Naive thymus-derived CD8-positive, alpha-beta T cell (primary cell): ENCODE measurements at regions of chr3 and their contacts with region 1.

Region 1: DNA sequence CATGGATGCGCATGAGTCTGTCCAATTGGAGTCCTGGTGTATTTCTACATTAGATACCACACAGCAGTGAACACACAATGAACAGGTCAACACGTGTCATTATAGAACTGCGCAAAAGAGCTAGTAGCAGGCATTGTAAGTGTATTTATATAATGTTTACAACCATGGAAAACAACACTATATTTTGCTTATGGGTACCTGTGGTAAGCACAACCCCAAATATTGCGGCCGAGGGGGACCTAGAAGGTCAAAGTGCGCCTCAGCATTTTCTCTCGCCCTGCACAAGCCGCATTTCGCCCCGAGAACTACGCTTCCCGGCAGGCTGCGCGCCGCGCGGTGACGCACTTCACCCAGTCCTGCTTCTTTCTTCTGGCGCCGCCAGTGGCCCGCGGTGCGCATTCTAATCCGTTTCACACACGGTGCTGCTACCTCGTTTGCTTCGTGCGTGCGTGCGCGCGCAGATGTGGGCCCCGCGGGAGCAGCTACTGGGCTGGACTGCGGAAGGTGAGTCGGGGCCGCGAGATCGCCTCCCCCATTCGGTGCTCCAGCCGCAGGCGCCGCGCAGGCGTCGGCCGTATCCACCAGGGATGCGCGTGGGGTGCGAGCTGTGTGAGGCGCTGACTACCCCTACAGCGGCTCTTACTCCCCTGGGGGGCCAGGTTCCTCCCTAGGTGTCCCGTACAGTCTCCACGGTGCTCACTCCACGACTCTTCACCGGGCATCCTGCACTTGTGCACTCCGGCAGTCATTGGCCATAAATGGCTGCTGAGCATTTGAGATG is at the start of gene ZNF589:
- DNase-seq: peak; percentile 89 to 98 (median 92)
- ATAC-seq: peak; percentile 98
- H3K4me3 Mint-ChIP-seq: peak within 1 kb of the TSS; percentile 86 to 95 (median 92)
- H3K27ac Mint-ChIP-seq: peak within 1 kb of the TSS; percentile 88 to 95 (median 92)
- H3K4me1 Mint-ChIP-seq: peaks cover 2 to 40% (median 19%) of the 10 kb centered on the region in 4 donors
- H3K27me3 Mint-ChIP-seq: no peaks in the 10 kb centered on the region
- polyA plus RNA-seq, gene ZNF589: 4.7 to 9.7 (median 6.6) TPM

Region 2: DNA sequence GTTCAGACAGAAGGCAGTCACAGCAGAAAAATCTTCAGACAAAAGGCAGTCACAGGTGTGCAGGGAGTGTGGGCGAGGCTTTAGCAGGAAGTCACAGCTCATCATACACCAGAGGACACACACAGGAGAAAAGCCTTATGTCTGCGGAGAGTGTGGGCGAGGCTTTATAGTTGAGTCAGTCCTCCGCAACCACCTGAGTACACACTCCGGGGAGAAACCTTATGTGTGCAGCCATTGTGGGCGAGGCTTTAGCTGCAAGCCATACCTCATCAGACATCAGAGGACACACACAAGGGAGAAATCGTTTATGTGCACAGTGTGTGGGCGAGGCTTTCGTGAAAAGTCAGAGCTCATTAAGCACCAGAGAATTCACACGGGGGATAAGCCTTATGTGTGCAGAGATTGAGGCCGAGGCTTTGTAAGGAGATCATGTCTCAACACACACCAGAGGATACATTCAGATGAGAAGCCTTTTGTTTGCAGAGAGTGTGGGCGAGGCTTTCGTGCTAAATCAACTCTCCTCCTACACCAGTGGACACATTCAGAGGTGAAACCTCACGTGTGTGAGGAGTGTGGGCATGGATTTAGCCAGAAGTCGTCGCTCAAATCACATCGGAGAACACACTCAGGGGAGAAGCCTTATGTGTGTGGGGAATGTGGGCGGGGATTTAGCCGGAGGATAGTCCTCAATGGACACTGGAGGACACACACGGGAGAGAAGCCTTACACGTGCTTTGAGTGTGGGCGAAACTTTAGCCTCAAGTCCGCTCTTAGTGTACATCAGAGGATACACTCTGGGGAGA is 27.7 kb after region 1 on chr3:
- POLR2A ChIA-PET with region 1: interaction called, 26 read pairs
- DNase-seq: peak; percentile 48 to 88 (median 80)
- ATAC-seq: peak; percentile 96 to 97
- H3K4me3 Mint-ChIP-seq: peak overlapping the region; percentile 65 to 89 (median 82)
- H3K27ac Mint-ChIP-seq: peak overlapping the region; percentile 84 to 99 (median 93)
- H3K4me1 Mint-ChIP-seq: peaks cover 18 to 37% (median 33%) of the 10 kb centered on the region in 4 donors
- H3K27me3 Mint-ChIP-seq: no peaks in the 10 kb centered on the region

Region 3: DNA sequence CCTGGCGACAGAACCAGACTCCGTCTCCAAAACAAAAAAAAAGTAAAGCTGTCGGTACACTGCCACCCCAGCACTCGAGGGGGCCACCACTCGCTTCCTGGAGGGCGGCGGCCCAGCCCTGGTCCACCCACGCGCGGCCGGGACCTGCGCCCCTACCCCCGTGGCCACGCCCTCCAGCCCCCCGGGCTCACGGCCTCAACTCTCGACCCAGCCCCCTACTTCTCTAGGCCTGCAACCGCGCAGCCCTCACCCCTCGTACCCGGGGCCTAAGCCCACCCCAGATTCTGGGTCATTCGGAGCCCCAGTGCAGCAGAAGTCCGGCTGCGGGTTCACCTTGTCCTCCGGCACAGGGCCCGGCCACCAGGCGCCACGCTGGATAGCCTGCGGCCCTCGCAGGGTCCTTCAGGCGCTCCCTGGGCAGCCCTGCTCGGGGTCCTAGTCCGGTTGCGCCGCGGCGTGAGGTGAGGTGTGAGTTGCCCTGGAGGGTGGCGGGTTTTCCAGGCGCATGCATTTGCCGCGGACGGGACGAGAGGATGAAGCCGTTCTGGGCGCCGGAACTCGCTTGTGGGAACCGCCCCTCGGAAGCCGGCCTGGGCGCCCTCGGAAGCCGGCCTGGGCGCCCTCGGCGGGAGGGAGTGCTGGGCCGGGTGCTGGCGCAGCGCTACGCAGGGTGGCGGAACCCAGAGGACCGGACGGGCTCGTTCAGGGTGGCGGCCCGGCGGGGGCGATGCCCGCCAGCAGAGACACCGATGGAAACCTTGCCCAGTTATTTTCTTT is 60.3 kb after region 1 on chr3:
- POLR2A ChIA-PET with region 1: interaction called, 20 read pairs
- DNase-seq: peak; percentile 68 to 89 (median 83)
- ATAC-seq: peak; percentile 77 to 81
- H3K4me3 Mint-ChIP-seq: peak within 1 kb of the TSS; percentile 87 to 97 (median 92)
- H3K27ac Mint-ChIP-seq: peak within 1 kb of the TSS; percentile 87 to 98 (median 96)
- H3K4me1 Mint-ChIP-seq: peaks cover 27 to 50% (median 43%) of the 10 kb centered on the region in 4 donors
- H3K27me3 Mint-ChIP-seq: no peaks in the 10 kb centered on the region